Esophagus muscularis mucosa (tissue), 4 donors: ENCODE measurements at regions of chr10 and their contacts with region 1.

Region 1: DNA sequence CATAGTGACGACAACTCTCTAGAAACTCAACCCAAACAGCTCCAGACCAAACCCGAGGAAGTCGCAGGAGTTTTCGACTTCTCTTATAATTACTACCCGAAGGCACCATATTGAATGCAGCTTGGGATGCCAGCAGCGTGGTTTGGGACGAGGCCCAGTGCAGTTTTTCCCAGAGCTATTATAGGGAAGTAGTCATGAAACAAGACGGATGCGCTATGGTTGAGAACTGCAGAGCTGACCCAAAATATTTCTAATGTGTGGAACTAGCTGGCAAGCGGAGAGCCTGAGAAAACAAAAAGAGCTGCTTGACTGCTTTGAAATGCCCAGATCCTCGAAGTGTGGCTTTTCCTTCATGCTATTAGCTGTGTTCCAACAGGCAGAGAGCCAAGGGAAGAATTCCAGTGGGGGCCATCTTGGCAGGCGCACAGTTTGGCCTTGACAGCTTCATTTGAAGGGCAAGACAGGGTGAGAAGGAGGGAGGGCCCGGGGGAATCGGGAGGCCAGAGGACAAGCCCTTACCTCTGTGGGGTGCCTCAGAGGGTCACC is 122.7 kb downstream of the CUL2 start:
- DNase-seq: no peak
- H3K4me3 ChIP-seq: peak overlapping the region in 1 of 4 donors; percentile 22
- H3K27ac ChIP-seq: peak overlapping the region; percentile 55 to 74 (median 64)
- H3K4me1 ChIP-seq: peaks cover 15 to 21% (median 20%) of the 10 kb centered on the region in 4 donors
- H3K27me3 ChIP-seq: no peaks in the 10 kb centered on the region
- CTCF ChIP-seq: no peak
- EP300 ChIP-seq: no peak
- POLR2A ChIP-seq: no peak

Region 2: GRCh38 chr10:34716958-34717357 is 250.4 kb before region 1 on chr10:
- intact Hi-C with region 1: loop called (anchors 5 kb)
- DNase-seq: peak; percentile 26
- H3K4me3 ChIP-seq: no peak overlapping the region
- H3K27ac ChIP-seq: no peak overlapping the region
- H3K4me1 ChIP-seq: peaks cover 38 to 79% (median 61%) of the 10 kb centered on the region in 4 donors
- H3K27me3 ChIP-seq: no peaks in the 10 kb centered on the region
- CTCF ChIP-seq: no peak
- EP300 ChIP-seq: no peak
- POLR2A ChIP-seq: no peak

Region 3: DNA sequence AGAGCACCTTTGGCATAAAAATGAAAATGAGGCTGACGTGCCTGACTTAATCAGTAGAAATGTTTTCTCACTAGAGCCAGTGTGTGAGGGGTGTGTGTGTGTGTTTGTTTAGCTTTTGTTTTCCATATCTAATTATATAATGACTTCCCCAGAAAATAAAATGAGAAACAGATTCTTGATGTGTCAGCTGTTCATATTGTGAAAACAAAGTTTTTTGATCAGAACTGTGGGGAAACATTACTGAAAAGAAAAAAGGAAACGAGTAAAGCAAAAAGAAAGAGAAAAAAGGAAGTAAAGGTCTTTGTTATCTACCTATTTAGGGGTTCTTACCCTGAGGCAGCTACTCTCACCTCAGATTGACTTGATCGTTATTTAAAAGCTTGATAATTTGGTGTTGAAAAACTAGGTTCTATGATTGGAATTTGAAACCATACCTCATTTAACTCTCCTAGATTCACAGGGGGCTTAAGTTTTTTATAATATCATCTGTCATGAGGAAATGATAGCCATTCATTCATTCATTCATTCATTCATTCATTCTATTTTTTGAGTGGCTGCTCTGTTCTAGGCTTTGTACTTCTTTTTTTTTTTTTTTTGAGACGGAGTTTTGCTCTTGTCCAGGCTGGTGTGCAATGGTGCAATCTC is 217.2 kb after region 1 on chr10:
- intact Hi-C with region 1: no loop called
- DNase-seq: no peak
- H3K4me3 ChIP-seq: no peak overlapping the region
- H3K27ac ChIP-seq: no peak overlapping the region
- H3K4me1 ChIP-seq: peaks cover 0 to 9% (median 4%) of the 10 kb centered on the region in 4 donors
- H3K27me3 ChIP-seq: no peaks in the 10 kb centered on the region
- CTCF ChIP-seq: no peak
- EP300 ChIP-seq: no peak
- POLR2A ChIP-seq: no peak